Activated CD8-positive, alpha-beta memory T cell treated with anti-CD3 and anti-CD28 coated beads, Interleukin-2, amount 10 ng/mL, durations not matched to agents 7 days and 5 days (primary cell): ENCODE measurements at regions of chr6 and their contacts with region 1.

Region 1: DNA sequence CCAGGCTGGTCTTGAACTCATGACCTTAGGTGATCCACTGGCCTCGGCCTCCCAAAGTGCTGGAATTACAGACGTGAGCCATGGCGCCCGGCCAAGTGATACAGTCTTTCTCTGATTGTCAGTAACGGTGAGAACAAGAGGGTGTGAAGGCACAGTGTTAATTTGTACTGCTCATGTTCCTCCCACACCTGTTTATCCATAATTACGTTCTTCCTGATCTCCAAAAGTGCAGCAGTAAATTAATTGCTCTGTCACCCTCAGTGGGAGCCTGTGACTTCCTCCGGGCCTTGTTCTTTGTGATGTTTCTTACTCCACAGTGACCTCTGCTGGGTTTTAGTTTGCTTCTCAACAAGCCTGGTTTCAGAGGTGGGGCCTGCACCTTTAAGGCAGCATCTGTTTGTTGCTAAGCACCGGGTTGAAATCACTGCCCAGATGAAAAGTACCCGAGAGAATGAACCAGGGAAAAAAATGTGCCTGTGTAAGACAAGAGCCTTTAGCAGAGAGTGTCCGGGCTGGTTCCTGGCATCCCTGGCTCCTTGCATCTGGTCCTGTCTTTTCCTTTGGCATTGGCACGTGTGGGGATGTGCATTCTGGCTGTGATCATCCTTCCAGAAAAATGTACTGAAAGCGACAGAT is 89.1 kb upstream of the CLDN20 start:
- DNase-seq: peak; percentile 80
- ATAC-seq: peak; percentile 60
- H3K4me3 Mint-ChIP-seq: no peak overlapping the region
- H3K27ac Mint-ChIP-seq: peak overlapping the region; percentile 44
- H3K4me1 Mint-ChIP-seq: peaks cover 44% of the 10 kb centered on the region
- H3K27me3 Mint-ChIP-seq: no peaks in the 10 kb centered on the region

Region 2: GRCh38 chr6:154675602-154676088 is 499.0 kb before region 1 on chr6:
- CTCF ChIA-PET with region 1: interaction called, 14 read pairs
- DNase-seq: peak; percentile 92
- ATAC-seq: peak; percentile 100
- H3K4me3 Mint-ChIP-seq: no peak overlapping the region
- H3K27ac Mint-ChIP-seq: no peak overlapping the region
- H3K4me1 Mint-ChIP-seq: no peaks in the 10 kb centered on the region
- H3K27me3 Mint-ChIP-seq: peaks cover 4% of the 10 kb centered on the region

Region 3: DNA sequence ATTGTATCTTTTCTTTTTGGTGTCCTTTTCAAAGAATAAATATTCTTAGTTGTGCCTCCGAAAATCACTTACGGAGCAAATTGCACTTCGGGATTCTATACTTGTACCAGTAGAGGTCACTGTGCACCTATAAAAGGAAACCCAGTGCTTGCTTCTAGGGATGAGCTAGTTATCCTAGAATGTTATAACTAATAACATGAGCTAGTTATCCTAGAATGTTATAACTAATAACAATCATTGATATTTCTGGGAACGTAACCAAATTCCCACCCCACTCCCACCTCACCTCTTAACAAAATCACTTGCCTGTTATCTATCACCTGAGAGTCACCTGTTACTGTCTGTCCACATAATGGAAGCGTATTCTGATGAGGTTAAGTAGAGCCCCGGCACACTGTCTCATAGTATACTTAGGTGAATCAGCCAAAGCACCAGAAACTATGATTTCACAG is 306.5 kb before region 1 on chr6:
- CTCF ChIA-PET with region 1: interaction called, 10 read pairs
- DNase-seq: no peak
- ATAC-seq: no peak
- H3K4me3 Mint-ChIP-seq: no peak overlapping the region
- H3K27ac Mint-ChIP-seq: no peak overlapping the region
- H3K4me1 Mint-ChIP-seq: peaks cover 3% of the 10 kb centered on the region
- H3K27me3 Mint-ChIP-seq: no peaks in the 10 kb centered on the region

Region 4: DNA sequence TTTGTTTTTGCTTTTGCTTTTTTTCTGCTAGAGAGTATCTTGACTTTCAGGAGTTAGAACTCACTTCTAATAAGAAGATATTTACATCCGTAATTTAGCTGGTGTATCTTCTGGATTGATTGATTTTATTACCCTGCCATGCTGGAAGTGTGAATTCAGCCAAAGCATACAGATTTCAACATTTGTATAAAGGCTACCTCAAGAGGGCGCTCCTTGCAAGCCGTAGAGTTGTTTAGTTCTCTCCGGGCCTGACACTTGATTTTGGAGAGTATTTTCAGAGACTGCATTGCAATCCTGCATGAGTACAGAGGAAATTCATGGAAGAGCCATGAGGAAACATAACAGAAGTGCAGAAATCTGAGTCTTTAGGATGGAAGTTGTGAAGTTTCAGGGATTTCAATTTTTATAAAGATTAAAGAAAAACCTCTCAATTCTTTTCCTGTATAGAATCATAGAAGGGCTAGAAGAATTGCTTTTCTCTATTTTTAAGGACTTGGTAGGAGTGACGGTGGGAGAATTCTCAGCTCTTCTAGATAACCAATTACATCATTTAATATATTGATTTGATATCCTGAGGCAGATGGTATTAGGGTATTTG is 246.3 kb before region 1 on chr6:
- CTCF ChIA-PET with region 1: interaction called, 60 read pairs
- DNase-seq: peak; percentile 74
- ATAC-seq: peak; percentile 76
- H3K4me3 Mint-ChIP-seq: no peak overlapping the region
- H3K27ac Mint-ChIP-seq: no peak overlapping the region
- H3K4me1 Mint-ChIP-seq: peaks cover 5% of the 10 kb centered on the region
- H3K27me3 Mint-ChIP-seq: no peaks in the 10 kb centered on the region

Region 5: GRCh38 chr6:155154158-155154830 is 20.4 kb before region 1 on chr6:
- CTCF ChIA-PET with region 1: interaction called, 32 read pairs
- DNase-seq: peak; percentile 69
- ATAC-seq: peak; percentile 80
- H3K4me3 Mint-ChIP-seq: peak overlapping the region; percentile 72
- H3K27ac Mint-ChIP-seq: peak overlapping the region; percentile 87
- H3K4me1 Mint-ChIP-seq: peaks cover 79% of the 10 kb centered on the region
- H3K27me3 Mint-ChIP-seq: no peaks in the 10 kb centered on the region

Region 6: GRCh38 chr6:155248008-155249001 is 73.6 kb after region 1 on chr6:
- CTCF ChIA-PET with region 1: interaction called, 29 read pairs
- DNase-seq: no peak
- ATAC-seq: no peak
- H3K4me3 Mint-ChIP-seq: no peak overlapping the region
- H3K27ac Mint-ChIP-seq: no peak overlapping the region
- H3K4me1 Mint-ChIP-seq: no peaks in the 10 kb centered on the region
- H3K27me3 Mint-ChIP-seq: no peaks in the 10 kb centered on the region

Region 7: GRCh38 chr6:155292711-155293110 is 118.0 kb after region 1 on chr6:
- CTCF ChIA-PET with region 1: no interaction called
- DNase-seq: no peak
- ATAC-seq: no peak
- H3K4me3 Mint-ChIP-seq: no peak overlapping the region
- H3K27ac Mint-ChIP-seq: no peak overlapping the region
- H3K4me1 Mint-ChIP-seq: peaks cover 10% of the 10 kb centered on the region
- H3K27me3 Mint-ChIP-seq: no peaks in the 10 kb centered on the region

Region 8: DNA sequence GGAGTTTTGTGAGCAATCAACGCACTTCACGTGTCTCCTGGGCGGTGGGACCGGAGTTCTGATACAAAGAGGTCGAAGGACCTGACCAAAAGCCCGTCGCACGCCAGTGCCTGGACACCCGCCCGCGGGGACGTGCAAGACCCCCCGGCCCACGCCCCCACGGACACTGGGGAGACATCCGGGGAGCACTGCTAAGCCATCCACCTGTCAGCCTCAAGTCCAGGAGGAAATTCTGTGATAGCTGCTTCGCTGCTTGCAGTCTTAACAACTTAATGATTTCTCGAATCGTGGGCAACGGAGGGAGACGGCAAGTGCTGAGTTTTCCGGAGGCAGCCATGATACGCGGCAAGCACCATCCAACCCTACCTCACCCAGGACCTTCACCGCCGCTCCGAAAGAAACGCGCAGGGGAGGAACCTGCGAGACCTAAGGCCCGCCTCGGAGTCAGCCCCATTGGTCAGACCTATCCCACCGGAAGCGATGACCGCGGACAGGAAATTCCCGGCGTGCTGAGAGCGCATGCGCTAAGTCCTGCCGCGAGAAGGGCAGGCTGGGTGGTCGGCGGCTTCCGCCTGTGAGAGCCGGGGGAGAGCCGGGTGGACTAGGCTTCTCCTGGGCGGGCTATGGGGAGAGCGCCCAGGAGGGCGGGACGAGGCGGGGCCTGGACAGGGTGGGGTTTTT is 139.5 kb after region 1 on chr6 and contains the start of gene TFB1M:
- CTCF ChIA-PET with region 1: interaction called, 45 read pairs
- DNase-seq: peak; percentile 99
- ATAC-seq: peak; percentile 96
- H3K4me3 Mint-ChIP-seq: peak within 1 kb of the TSS; percentile 99
- H3K27ac Mint-ChIP-seq: peak within 1 kb of the TSS; percentile 92
- H3K4me1 Mint-ChIP-seq: peaks cover 45% of the 10 kb centered on the region
- H3K27me3 Mint-ChIP-seq: peaks cover 6% of the 10 kb centered on the region
- total RNA-seq, gene TFB1M: 33.6 to 35.5 TPM

Region 9: DNA sequence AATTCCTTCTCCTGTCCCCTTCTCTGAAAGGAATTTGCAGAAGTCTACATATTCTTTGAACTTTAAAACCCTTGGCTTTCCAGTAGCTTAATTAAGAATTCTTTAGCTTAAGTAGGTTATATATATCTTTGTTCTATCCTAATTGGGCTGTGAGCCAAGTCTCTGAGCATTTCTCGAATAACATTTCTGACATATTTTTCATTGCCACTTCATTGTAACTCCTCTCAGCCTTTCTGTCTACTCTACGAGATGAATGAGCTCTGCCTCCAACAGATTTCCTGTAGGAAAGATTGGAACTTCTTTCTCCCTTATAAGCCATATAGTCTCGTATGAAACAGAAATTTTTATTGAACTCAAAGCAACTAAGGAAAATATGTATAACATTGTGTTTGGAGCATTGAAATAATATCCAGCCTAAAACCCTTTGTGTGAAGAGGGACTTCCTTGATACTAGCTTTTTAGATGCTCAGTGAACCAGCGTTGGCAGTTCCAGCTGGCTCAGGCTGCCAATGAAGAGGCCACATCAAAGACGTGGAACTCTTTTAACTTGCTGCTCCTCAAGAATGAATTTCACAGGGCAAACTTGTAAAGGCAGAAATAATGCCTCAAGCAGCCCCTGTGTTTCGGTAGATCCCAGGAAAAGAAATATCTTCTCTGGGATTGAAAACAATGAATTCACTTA is 368.6 kb after region 1 on chr6:
- CTCF ChIA-PET with region 1: no interaction called
- DNase-seq: no peak
- ATAC-seq: no peak
- H3K4me3 Mint-ChIP-seq: no peak overlapping the region
- H3K27ac Mint-ChIP-seq: no peak overlapping the region
- H3K4me1 Mint-ChIP-seq: no peaks in the 10 kb centered on the region
- H3K27me3 Mint-ChIP-seq: peaks cover 6% of the 10 kb centered on the region